ENCODE measurements at regions of chr13 and their contacts with region 1.

Region 1: GRCh38 chr13:32310134-32310706 is 4.9 kb downstream of the ZAR1L start:
- DNase-seq: peak; percentile 65
- ATAC-seq: peak; percentile 89
- H3K4me3 ChIP-seq: peak overlapping the region in 2 of 3 experiments; percentile 41 to 44; a peak in 3 of 6 replicates
- H3K27ac ChIP-seq: peak overlapping the region; percentile 19
- H3K4me1 ChIP-seq: peaks cover 31% of the 10 kb centered on the region
- H3K27me3 ChIP-seq: no peaks in the 10 kb centered on the region
- CTCF ChIP-seq: peak; percentile 77
- EP300 ChIP-seq: no peak
- POLR2A ChIP-seq: no peak
- RAD21 ChIP-seq: peak; percentile 53

Region 2: GRCh38 chr13:32001185-32001768 is 308.9 kb before region 1 on chr13:
- CTCF ChIA-PET with region 1: no interaction called
- POLR2A ChIA-PET with region 1: interaction called, 3 read pairs
- in situ Hi-C with region 1: no loop called
- intact Hi-C with region 1: loop called (anchors 1 kb)
- DNase-seq: peak; percentile 71
- ATAC-seq: peak; percentile 96
- H3K4me3 ChIP-seq: no peak overlapping the region
- H3K27ac ChIP-seq: no peak overlapping the region
- H3K4me1 ChIP-seq: peaks cover 8% of the 10 kb centered on the region
- H3K27me3 ChIP-seq: peaks cover 2 to 3% of the 10 kb centered on the region in 2 experiments; a peak in 1 of 5 replicates
- CTCF ChIP-seq: peak; percentile 74
- EP300 ChIP-seq: no peak
- POLR2A ChIP-seq: no peak
- RAD21 ChIP-seq: no peak

Region 3: GRCh38 chr13:32019612-32020233 is 290.5 kb before region 1 on chr13:
- CTCF ChIA-PET with region 1: interaction called, 8 read pairs
- POLR2A ChIA-PET with region 1: no interaction called
- in situ Hi-C with region 1: loop called (anchors 5 kb)
- intact Hi-C with region 1: loop called (anchors 1 kb)
- DNase-seq: peak; percentile 73
- ATAC-seq: peak; percentile 92
- H3K4me3 ChIP-seq: no peak overlapping the region
- H3K27ac ChIP-seq: no peak overlapping the region
- H3K4me1 ChIP-seq: peaks cover 20% of the 10 kb centered on the region; the same call in 1 of the 2 replicates
- H3K27me3 ChIP-seq: no peaks in the 10 kb centered on the region
- CTCF ChIP-seq: peak; percentile 89
- EP300 ChIP-seq: no peak
- POLR2A ChIP-seq: no peak
- RAD21 ChIP-seq: peak; percentile 73

Region 4: GRCh38 chr13:32246468-32246867 is 63.8 kb before region 1 on chr13:
- CTCF ChIA-PET with region 1: interaction called, 51 read pairs
- POLR2A ChIA-PET with region 1: interaction called, 6 read pairs
- in situ Hi-C with region 1: loop called (anchors 5 kb)
- intact Hi-C with region 1: loop called (anchors 1 kb)
- DNase-seq: peak; percentile 67
- ATAC-seq: peak; percentile 95
- H3K4me3 ChIP-seq: no peak overlapping the region
- H3K27ac ChIP-seq: no peak overlapping the region
- H3K4me1 ChIP-seq: peaks cover 62% of the 10 kb centered on the region
- H3K27me3 ChIP-seq: no peaks in the 10 kb centered on the region
- CTCF ChIP-seq: peak; percentile 87
- EP300 ChIP-seq: no peak
- POLR2A ChIP-seq: no peak
- RAD21 ChIP-seq: peak; percentile 75

Measured in HepG2 (cell line).